Heart right ventricle (tissue), 16 donors: ENCODE measurements at regions of chr15 and their contacts with region 1.

Region 1: DNA sequence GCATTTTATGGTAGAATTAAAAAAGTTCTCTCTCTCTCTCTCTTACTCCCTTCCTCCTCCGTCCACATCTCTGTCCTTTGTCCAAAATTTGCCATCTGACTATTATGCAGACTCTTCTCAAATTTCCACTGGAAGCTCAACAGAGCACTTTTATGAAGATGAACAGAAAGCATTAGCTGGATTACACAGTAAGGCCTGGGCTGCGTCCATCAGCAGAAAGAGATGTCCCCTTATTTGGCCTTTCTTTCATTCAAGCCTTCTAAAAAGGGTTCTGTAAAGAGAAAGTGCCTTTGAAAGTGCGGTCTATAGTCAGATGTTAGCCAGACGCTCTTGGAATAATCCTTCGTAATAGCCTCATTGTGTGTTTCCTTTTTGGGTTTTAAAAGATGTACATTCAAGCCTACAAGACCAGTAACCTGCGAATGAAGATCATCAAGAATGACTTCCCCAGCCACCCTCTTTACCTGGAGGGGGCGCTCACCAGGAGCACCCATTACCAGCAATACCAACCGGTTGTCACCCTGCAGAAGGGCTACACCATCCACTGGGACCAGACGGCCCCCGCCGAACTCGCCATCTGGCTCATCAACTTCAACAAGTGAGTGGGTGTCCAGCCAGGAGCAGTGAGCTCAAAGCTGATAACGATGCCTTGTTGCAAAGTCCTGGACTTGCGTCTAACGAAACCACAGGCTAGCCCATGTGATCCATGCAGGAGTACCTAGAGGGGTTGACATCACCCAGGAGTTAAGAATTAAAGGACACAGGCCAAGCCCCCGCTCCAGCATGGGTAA is 53.1 kb downstream of the MESD start:
- DNase-seq: no peak
- ATAC-seq: peak in 1 of 8 donors; percentile 46
- H3K4me3 ChIP-seq: no peak overlapping the region
- H3K27ac ChIP-seq: no peak overlapping the region
- H3K4me1 ChIP-seq: peaks cover 0 to 31% (median 16%) of the 10 kb centered on the region in 9 donors
- H3K27me3 ChIP-seq: no peaks in the 10 kb centered on the region
- CTCF ChIP-seq: no peak

Region 2: DNA sequence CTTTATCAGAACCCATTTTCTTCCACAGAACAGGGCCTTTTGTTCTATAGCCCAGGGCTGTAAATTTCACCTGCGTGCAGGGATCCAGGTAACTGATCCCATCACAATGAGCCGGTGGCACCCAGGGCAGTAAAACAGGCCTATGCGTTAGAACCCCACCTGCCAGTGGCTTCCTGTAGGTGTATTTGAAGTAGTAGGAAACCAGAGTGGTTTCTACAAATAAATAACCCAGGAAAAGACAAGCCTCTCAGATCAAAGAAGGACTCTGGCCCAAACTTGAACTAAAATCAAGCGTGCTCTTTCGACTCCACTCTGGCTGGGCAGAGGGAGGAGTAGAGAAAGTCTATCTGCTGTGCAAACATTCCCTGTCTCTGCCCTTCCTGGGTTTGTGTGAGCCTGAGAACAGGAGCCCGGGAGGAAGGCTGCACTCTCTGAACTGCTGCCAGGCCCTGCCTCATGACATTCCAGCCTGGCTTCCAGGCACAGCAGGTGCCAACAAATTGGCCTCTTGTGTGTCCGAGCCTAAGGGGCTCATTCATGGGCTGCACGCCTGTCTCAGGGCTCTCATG is 79.6 kb before region 1 on chr15:
- intact Hi-C with region 1: loop called in 1 of 10 experiments (anchors 2 kb)
- DNase-seq: peak; percentile 72
- ATAC-seq: peak; percentile 79 to 95 (median 87)
- H3K4me3 ChIP-seq: no peak overlapping the region
- H3K27ac ChIP-seq: no peak overlapping the region
- H3K4me1 ChIP-seq: peaks cover 8 to 24% (median 13%) of the 10 kb centered on the region in 9 donors
- H3K27me3 ChIP-seq: no peaks in the 10 kb centered on the region
- CTCF ChIP-seq: no peak